ENCODE measurements at regions of chr16 and their contacts with region 1.

Region 1: GRCh38 chr16:89453501-89454321 is 36.6 kb downstream of the ANKRD11 start:
- DNase-seq: no peak
- H3K4me3 Mint-ChIP-seq: peak overlapping the region; percentile 2
- H3K27ac Mint-ChIP-seq: peak overlapping the region; percentile 60
- H3K4me1 Mint-ChIP-seq: peaks cover 47% of the 10 kb centered on the region
- H3K27me3 Mint-ChIP-seq: no peaks in the 10 kb centered on the region
- CTCF ChIP-seq: peak; percentile 52

Region 2: DNA sequence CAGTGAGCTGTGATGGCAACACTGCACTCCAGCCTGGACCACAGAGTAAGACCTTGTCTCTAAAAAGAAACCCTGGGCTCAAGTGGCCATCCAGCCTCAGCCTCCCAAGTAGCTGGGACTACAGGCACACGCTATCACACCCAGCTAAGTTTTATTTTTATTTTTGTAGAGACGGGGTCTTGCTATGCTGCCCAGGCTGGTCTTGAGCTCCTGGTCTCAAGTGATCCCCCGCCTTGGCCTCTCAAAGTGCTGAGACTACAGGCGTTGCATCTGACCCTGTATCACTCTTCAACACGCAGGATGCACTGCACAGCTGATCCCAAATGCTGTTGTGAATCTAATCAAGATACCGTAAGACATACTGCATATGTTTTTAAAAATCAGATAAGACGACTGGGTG is 13.7 kb after region 1 on chr16:
- CTCF ChIA-PET with region 1: no interaction called
- intact Hi-C with region 1: no loop called
- DNase-seq: no peak
- H3K4me3 Mint-ChIP-seq: no peak overlapping the region
- H3K27ac Mint-ChIP-seq: no peak overlapping the region
- H3K4me1 Mint-ChIP-seq: peaks cover 13% of the 10 kb centered on the region
- H3K27me3 Mint-ChIP-seq: no peaks in the 10 kb centered on the region
- CTCF ChIP-seq: no peak

Region 3: GRCh38 chr16:89489040-89489721 is 35.5 kb after region 1 on chr16:
- CTCF ChIA-PET with region 1: no interaction called
- intact Hi-C with region 1: loop called (anchors 5 kb)
- DNase-seq: peak; percentile 86
- H3K4me3 Mint-ChIP-seq: peak overlapping the region; percentile 85
- H3K27ac Mint-ChIP-seq: peak overlapping the region; percentile 79
- H3K4me1 Mint-ChIP-seq: peaks cover 45% of the 10 kb centered on the region
- H3K27me3 Mint-ChIP-seq: no peaks in the 10 kb centered on the region
- CTCF ChIP-seq: no peak